ENCODE measurements at regions of chr12 and their contacts with region 1.

Region 1: DNA sequence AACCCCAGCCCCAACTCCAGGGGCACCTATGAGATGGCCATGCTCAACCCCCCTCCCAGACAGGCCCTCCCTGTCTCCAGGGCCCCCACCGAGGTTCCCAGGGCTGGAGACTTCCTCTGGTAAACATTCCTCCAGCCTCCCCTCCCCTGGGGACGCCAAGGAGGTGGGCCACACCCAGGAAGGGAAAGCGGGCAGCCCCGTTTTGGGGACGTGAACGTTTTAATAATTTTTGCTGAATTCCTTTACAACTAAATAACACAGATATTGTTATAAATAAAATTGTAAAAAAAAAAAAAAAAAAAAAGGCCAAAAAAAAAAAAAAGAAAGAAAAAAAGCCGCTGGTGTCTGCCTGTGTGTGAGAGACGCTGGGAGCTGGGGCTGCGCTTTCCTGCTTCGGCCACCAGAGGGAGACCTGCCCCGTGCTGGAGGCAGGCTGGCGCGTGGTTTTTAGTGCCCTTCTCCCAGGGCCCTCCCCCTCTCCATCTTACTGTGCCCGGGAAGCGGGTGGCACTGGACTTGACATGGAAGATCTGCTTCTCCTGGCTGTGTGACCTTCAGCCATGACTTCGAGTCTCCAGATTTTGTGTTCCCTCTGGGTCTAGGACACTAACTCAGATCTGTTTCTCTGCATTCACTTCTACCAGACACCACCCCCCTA is 3.4 kb upstream of the NXPH4 start:
- DNase-seq: peak; percentile 88
- ATAC-seq: peak; percentile 61
- H3K4me3 Mint-ChIP-seq: no peak overlapping the region
- H3K27ac Mint-ChIP-seq: peak overlapping the region; percentile 66
- H3K4me1 Mint-ChIP-seq: peaks cover 35% of the 10 kb centered on the region
- H3K27me3 Mint-ChIP-seq: peaks cover 41% of the 10 kb centered on the region

Region 2: DNA sequence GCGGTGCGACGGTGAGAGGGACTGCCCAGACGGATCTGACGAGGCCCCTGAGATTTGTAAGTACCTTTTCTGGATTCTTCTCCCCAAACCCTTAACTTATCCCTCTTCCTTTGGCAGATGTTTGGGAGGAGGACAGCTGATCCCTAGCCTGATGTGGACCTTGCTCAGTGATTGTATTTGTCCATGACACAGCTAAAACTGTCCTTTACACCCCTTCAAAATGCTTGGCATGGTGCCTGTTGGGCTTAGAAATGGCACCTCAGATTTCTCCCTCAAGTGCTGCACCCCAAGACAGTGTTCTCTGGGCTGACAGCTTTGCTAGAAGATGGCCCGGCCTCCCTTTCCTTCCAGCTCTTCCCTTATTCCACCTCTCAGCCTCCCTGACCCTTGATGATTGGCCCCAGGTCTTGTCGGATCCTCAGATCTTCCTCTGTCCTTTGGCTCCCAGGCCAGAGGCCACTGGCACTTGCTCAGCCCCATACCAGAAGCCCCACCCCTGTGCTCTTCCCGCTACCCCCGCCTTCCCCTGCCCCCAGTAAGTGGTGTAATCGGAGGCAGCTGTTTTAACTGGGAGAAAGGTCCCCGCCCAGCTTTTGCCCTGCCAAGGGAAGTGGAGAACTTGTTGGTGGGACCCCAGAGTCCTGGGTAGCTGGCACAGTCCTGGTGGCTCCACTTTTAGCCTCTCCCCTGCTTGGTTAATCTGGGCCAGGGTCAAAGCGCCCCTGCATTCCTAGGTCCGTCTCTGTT is 74.5 kb before region 1 on chr12:
- CTCF ChIA-PET with region 1: no interaction called
- POLR2A ChIA-PET with region 1: no interaction called
- DNase-seq: no peak
- ATAC-seq: no peak
- H3K4me3 Mint-ChIP-seq: no peak overlapping the region
- H3K27ac Mint-ChIP-seq: no peak overlapping the region
- H3K4me1 Mint-ChIP-seq: peaks cover 13% of the 10 kb centered on the region
- H3K27me3 Mint-ChIP-seq: peaks cover 3% of the 10 kb centered on the region

Region 3: GRCh38 chr12:57182921-57183790 is 30.0 kb before region 1 on chr12:
- CTCF ChIA-PET with region 1: interaction called, 12 read pairs
- POLR2A ChIA-PET with region 1: no interaction called
- DNase-seq: peak; percentile 87
- ATAC-seq: peak; percentile 96
- H3K4me3 Mint-ChIP-seq: no peak overlapping the region
- H3K27ac Mint-ChIP-seq: no peak overlapping the region
- H3K4me1 Mint-ChIP-seq: peaks cover 5% of the 10 kb centered on the region
- H3K27me3 Mint-ChIP-seq: no peaks in the 10 kb centered on the region

Region 4: DNA sequence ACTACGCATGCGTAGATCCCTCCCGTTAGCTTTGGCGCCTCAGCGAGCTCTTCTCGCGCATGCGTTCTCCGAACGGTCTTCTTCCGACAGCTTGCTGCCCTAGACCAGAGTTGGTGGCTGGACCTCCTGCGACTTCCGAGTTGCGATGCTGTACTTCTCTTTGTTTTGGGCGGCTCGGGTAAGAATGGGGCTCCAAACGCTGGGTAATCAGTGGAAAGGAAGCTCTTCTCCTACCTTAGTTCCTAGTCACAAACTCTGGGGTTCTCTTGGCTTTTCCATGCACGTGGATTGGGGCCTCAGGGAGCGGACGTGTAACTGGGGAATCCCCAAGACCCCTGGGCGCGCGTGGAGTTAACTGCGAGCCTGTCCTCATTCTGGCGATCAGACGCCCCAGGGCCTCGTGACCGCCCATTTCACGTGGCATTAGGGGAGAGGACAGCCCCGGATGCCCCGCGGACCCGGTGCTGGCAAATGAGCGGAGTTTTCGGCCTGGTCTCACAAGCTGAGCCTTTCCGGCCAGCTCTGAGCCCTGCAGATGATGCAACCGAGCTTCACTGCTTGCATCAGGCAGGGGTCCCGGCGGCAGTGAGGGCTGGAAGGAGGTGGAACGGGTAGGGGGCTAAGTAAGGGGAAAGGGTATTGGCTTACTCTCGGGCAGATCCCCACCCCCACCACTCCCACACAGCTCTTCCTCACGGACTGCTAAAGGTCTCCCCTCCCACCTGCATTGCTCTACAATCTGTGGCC is 16.6 kb after region 1 on chr12 and contains the start of gene SHMT2:
- CTCF ChIA-PET with region 1: interaction called, 167 read pairs
- POLR2A ChIA-PET with region 1: interaction called, 6 read pairs
- DNase-seq: peak; percentile 96
- ATAC-seq: peak; percentile 74
- H3K4me3 Mint-ChIP-seq: peak within 1 kb of the TSS; percentile 98
- H3K27ac Mint-ChIP-seq: peak within 1 kb of the TSS; percentile 94
- H3K4me1 Mint-ChIP-seq: peaks cover 67% of the 10 kb centered on the region
- H3K27me3 Mint-ChIP-seq: peaks cover 21% of the 10 kb centered on the region
- total RNA-seq, gene SHMT2: 194 to 208 TPM

Region 5: DNA sequence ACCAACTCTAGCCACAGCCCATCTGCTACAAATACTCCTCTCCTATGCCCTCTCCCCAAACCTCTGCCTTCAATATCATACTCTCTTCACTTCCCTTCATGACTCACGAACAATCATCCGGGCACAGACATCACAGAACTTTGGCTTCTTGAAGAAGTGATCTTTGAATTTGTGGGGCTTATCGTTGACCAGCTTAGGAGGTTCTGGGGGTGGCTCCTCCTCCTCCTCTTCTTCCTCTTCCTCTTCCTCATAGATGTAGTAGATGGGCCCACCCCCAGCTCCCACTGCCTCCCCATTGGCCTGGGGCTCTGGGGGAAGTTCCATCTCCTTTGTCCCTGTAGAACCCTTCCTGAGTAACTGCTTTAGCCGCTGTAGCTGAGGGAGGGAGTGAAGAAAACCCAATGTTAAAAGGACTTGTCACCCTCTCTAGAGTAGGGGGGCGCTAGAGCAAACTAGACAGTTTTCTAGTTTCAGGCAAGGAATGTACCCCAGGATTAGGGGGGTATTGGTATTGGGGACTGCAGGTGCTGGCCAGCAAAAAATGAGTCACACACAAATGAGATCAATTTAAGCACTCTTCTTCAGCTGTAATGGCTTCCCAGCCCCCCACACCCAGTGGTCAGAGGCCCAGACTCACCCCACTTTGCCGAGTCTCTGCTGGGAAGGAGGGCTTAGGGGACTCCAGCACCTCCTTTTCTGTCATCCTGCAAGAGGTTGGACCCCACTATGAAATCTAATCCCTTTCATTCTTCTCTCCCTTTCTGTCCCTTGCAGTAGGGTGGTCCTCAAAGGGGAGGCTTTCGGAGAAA is 36.0 kb after region 1 on chr12:
- CTCF ChIA-PET with region 1: interaction called, 246 read pairs
- POLR2A ChIA-PET with region 1: no interaction called
- DNase-seq: no peak
- ATAC-seq: peak; percentile 58
- H3K4me3 Mint-ChIP-seq: peak overlapping the region; percentile 46
- H3K27ac Mint-ChIP-seq: peak overlapping the region; percentile 44
- H3K4me1 Mint-ChIP-seq: peaks cover 11% of the 10 kb centered on the region
- H3K27me3 Mint-ChIP-seq: no peaks in the 10 kb centered on the region

Region 6: DNA sequence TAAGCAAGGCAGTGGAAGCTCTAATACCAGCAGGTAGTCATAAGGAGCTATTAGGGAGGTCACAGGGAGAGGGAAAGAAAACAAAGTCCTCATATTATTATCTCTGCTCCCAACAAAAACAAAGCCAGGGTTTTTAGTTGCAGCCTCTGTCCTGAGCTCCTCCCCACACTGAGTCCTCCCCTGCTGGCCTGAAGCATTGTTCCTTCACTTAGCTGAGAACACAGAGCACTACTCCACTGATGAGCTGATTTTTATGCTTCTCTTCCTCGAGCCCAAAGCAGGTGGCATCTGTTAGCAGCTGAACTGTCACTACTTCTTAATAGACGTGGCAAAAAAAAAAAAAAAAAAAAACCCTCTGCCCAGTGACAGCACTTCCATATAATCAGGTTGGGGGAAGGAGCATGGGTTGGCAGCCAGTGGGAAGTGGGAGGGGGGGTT is 48.3 kb after region 1 on chr12:
- CTCF ChIA-PET with region 1: interaction called, 16 read pairs
- POLR2A ChIA-PET with region 1: no interaction called
- DNase-seq: no peak
- ATAC-seq: no peak
- H3K4me3 Mint-ChIP-seq: no peak overlapping the region
- H3K27ac Mint-ChIP-seq: no peak overlapping the region
- H3K4me1 Mint-ChIP-seq: peaks cover 8% of the 10 kb centered on the region
- H3K27me3 Mint-ChIP-seq: no peaks in the 10 kb centered on the region

Region 7: GRCh38 chr12:57280211-57281062 is 67.2 kb after region 1 on chr12:
- CTCF ChIA-PET with region 1: interaction called, 12 read pairs
- POLR2A ChIA-PET with region 1: no interaction called
- DNase-seq: peak; percentile 82
- ATAC-seq: peak; percentile 99
- H3K4me3 Mint-ChIP-seq: peak overlapping the region; percentile 45
- H3K27ac Mint-ChIP-seq: peak overlapping the region; percentile 95
- H3K4me1 Mint-ChIP-seq: peaks cover 15% of the 10 kb centered on the region
- H3K27me3 Mint-ChIP-seq: no peaks in the 10 kb centered on the region